ENCODE measurements at regions of chr1 and their contacts with region 1.

Region 1: GRCh38 chr1:40257688-40258444 is at the start of gene ZMPSTE24:
- DNase-seq: peak; percentile 90 to 98
- ATAC-seq: peak; percentile 95 to 99 (median 95)
- H3K4me3 ChIP-seq: peak within 1 kb of the TSS; percentile 99
- H3K4me3 Mint-ChIP-seq: peak within 1 kb of the TSS; percentile 98
- H3K27ac ChIP-seq: peak within 1 kb of the TSS; percentile 86
- H3K27ac Mint-ChIP-seq: peak within 1 kb of the TSS; percentile 98 to 100
- H3K4me1 ChIP-seq: peaks cover 19% of the 10 kb centered on the region
- H3K4me1 Mint-ChIP-seq: peaks cover 23 to 27% of the 10 kb centered on the region in 2 donors
- H3K27me3 ChIP-seq: no peaks in the 10 kb centered on the region
- H3K27me3 Mint-ChIP-seq: no peaks in the 10 kb centered on the region
- CTCF ChIP-seq: no peak
- total RNA-seq, gene ZMPSTE24: 15.3 to 19.5 (median 19.3) TPM

Region 2: DNA sequence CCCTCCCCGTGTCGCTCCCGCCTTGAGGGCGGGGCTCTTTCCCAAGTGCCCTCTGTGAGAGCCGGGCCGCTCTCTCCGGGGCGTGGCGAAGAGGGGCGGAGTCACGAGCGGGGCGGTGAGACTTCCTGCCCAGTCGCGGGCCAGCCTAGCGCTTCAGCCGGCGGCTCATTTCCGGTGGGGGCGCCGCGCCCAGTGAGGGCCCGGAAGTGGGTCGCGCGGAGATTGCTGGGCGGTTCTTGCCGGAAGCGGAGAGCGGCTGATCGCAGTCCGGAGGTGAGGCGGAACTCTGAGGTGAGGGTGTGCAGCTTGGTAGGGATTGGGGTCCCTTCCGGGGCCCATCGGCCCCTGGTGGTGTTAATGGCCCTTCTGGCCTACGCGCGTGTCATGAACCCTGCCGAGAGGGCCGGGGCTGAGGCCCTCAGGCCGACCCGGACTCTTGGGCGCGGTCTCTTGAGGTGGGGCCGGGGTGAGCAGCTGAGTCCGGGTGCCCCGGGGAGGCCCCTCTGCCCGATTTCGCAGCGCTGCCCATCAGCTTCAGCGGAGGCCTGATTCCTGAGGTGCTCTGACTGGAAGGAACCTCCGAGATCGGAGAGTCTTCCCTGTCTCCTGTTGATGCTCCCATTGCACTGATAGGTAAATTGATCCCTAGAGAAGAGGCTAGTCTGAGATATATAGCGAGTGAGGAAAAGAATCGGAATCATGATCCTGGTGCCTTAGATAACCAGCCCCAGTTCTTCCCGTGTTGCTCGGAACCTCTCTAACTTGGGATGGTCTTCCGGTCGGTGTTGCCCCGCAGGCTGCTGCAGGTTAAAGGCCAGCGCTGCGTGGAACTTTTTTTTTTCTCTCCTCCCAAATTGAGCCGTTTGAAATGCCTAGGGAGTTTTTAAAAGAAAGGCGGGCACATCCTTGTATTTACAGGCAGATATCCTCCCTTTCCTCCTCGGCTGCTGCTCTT is 217.1 kb before region 1 on chr1 and contains the start of gene CAP1:
- intact Hi-C with region 1: loop called (anchors 2 kb)
- DNase-seq: peak; percentile 99 to 100
- ATAC-seq: peak; percentile 91 to 98 (median 91)
- H3K4me3 ChIP-seq: peak within 1 kb of the TSS; percentile 99
- H3K4me3 Mint-ChIP-seq: peak within 1 kb of the TSS; percentile 84
- H3K27ac ChIP-seq: peak within 1 kb of the TSS; percentile 98
- H3K27ac Mint-ChIP-seq: peak within 1 kb of the TSS; percentile 96 to 98
- H3K4me1 ChIP-seq: peaks cover 73% of the 10 kb centered on the region
- H3K4me1 Mint-ChIP-seq: peaks cover 69 to 77% of the 10 kb centered on the region in 2 donors
- H3K27me3 ChIP-seq: no peaks in the 10 kb centered on the region
- H3K27me3 Mint-ChIP-seq: no peaks in the 10 kb centered on the region
- CTCF ChIP-seq: no peak
- total RNA-seq, gene CAP1: 482 to 541 (median 537) TPM

Region 3: GRCh38 chr1:40161125-40161887 is 96.6 kb before region 1 on chr1 and contains the start of gene RLF:
- intact Hi-C with region 1: loop called (anchors 5 kb)
- DNase-seq: peak; percentile 97
- ATAC-seq: peak; percentile 94 to 99 (median 96)
- H3K4me3 ChIP-seq: peak within 1 kb of the TSS; percentile 91
- H3K4me3 Mint-ChIP-seq: no peak within 1 kb of the TSS
- H3K27ac ChIP-seq: peak within 1 kb of the TSS; percentile 99
- H3K27ac Mint-ChIP-seq: no peak within 1 kb of the TSS
- H3K4me1 ChIP-seq: peaks cover 11% of the 10 kb centered on the region
- H3K4me1 Mint-ChIP-seq: peaks cover 7 to 18% of the 10 kb centered on the region in 2 donors
- H3K27me3 ChIP-seq: no peaks in the 10 kb centered on the region
- H3K27me3 Mint-ChIP-seq: no peaks in the 10 kb centered on the region
- CTCF ChIP-seq: no peak
- total RNA-seq, gene RLF: 25.6 to 29.7 (median 26.7) TPM

Region 4: DNA sequence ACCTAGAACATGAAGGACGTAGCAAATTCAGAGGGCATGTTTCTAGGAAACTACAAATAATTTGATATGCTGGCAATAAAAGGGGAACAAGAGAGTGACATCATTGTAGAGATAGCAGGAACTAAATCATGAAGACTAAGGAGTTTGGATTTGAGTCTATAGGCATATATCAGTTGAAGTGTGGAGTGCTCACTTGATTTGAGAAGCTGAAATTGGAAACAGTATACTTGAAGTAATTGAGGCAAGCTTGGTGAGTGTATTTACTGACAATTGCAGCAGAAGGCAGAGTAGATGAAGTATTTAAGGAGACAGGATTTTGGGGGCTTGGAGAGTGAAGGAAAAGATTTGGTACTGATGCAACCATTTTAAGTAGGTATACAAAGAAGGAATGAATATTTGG is 16.5 kb before region 1 on chr1:
- intact Hi-C with region 1: no loop called
- DNase-seq: no peak
- ATAC-seq: no peak
- H3K4me3 ChIP-seq: no peak overlapping the region
- H3K4me3 Mint-ChIP-seq: no peak overlapping the region
- H3K27ac ChIP-seq: no peak overlapping the region
- H3K27ac Mint-ChIP-seq: peak overlapping the region; percentile 3 to 14
- H3K4me1 ChIP-seq: no peaks in the 10 kb centered on the region
- H3K4me1 Mint-ChIP-seq: peaks cover 6 to 11% of the 10 kb centered on the region in 2 donors
- H3K27me3 ChIP-seq: no peaks in the 10 kb centered on the region
- H3K27me3 Mint-ChIP-seq: no peaks in the 10 kb centered on the region
- CTCF ChIP-seq: no peak

Region 5: DNA sequence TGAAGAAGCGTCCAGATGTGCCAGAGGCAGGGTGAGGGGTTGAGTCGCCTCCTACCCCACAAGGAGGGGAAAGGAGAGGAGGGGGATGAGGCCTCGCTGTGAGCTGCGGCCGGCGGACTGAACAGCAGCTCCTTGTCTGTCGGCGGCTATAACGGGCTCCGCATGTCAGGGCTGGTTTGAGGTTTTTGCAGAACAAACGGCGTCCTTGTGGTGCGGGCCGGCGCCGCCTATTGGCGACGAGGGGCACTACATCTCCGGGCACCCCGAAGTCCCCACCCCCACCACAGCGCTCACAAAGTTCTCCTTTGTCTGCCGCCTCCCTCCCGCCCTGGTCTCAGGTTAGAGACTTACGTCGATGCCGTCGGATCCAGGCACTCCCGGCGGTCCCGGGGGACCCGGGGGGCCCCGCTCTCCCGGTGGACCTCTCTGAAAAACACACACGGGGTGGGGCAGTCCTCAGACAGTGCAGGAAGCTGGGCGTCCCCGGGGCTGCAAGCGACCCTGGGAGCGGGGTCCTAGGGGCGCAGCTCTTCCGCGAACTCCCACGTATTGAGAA is 57.5 kb after region 1 on chr1:
- intact Hi-C with region 1: loop called (anchors 5 kb)
- DNase-seq: peak; percentile 80 to 93
- ATAC-seq: peak; percentile 83 to 93 (median 83)
- H3K4me3 ChIP-seq: peak overlapping the region; percentile 46
- H3K4me3 Mint-ChIP-seq: peak overlapping the region; percentile 92
- H3K27ac ChIP-seq: no peak overlapping the region
- H3K27ac Mint-ChIP-seq: peak overlapping the region in 1 of 2 donors; percentile 75
- H3K4me1 ChIP-seq: peaks cover 51% of the 10 kb centered on the region
- H3K4me1 Mint-ChIP-seq: peaks cover 27 to 33% of the 10 kb centered on the region in 2 donors
- H3K27me3 ChIP-seq: peaks cover 18% of the 10 kb centered on the region
- H3K27me3 Mint-ChIP-seq: peaks cover 20% of the 10 kb centered on the region in 2 donors
- CTCF ChIP-seq: peak; percentile 90

Measured in natural killer cell (primary cell).